Transverse colon (tissue), 4 donors: ENCODE measurements at regions of chr20 and their contacts with region 1.

Region 1: DNA sequence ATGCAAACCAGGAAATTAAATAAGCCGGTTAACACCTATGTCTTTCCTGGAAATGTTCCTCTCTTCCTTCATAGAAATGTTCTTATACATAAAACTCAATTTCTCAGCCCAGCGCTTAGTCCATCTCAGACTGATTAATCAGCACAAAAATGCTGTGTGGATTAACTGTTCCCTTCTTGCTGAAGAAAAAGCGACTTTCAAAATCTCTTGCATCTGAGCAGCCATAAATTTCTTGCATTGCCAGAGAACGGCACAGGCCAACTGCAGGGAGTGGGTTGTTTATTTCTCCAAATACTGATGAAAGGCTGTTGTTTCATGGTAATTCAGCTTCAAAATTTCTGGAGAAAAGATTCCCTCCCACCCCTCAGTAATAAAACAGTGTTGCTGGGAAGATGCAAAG is 517.6 kb downstream of the BTBD3 start:
- DNase-seq: no peak
- H3K4me3 ChIP-seq: no peak overlapping the region
- H3K27ac ChIP-seq: peak overlapping the region in 3 of 4 donors; percentile 14 to 34 (median 27)
- H3K4me1 ChIP-seq: no peaks in the 10 kb centered on the region
- H3K27me3 ChIP-seq: no peaks in the 10 kb centered on the region
- CTCF ChIP-seq: no peak
- EP300 ChIP-seq: no peak
- POLR2A ChIP-seq: no peak

Region 2: DNA sequence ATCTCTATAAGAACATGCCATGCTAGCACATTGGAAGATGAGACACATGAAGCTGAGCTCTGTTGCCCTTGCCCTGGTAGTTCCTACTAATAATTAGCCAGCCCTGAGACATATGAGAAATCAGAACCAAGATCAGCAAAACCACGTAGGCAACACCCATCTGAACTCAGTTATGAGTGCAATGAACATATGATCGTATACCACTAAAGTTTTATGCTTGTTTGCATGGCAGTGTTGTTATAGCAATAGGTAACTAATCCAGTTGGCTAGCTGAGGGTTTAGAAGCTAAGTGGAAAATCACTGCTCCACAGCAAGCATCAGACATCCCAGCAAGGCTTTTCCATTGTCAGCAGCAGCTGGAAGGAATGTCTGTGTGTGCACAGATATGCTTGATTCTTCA is 336.8 kb before region 1 on chr20:
- in situ Hi-C with region 1: no loop called
- intact Hi-C with region 1: no loop called
- DNase-seq: peak; percentile 37
- H3K4me3 ChIP-seq: no peak overlapping the region
- H3K27ac ChIP-seq: peak overlapping the region; percentile 71 to 84 (median 82)
- H3K4me1 ChIP-seq: peaks cover 8 to 26% (median 20%) of the 10 kb centered on the region in 4 donors
- H3K27me3 ChIP-seq: no peaks in the 10 kb centered on the region
- CTCF ChIP-seq: no peak
- EP300 ChIP-seq: no peak
- POLR2A ChIP-seq: no peak

Region 3: DNA sequence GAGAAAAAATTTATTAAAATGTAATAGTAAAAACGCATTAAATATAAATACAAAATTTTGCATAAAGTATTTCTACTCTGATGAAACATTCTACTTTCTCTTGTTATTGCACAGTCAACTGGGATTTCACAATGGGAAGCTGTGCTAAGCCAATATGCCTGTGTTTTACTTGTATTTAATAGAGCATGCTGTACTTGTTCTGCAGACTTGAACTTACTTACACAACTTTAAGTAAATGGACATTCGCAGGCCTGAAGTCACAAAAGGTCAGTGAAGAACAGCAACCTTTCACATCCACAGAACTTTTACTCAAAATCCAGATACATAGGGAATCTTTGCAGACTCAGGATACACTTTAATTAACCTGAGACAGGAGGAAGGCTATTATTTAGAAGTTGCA is 108.1 kb before region 1 on chr20:
- in situ Hi-C with region 1: loop called in 1 of 4 experiments (anchors 25 kb)
- intact Hi-C with region 1: no loop called
- DNase-seq: no peak
- H3K4me3 ChIP-seq: no peak overlapping the region
- H3K27ac ChIP-seq: no peak overlapping the region
- H3K4me1 ChIP-seq: no peaks in the 10 kb centered on the region
- H3K27me3 ChIP-seq: no peaks in the 10 kb centered on the region
- CTCF ChIP-seq: no peak
- EP300 ChIP-seq: no peak
- POLR2A ChIP-seq: no peak